B cell (primary cell): ENCODE measurements at regions of chr10 and their contacts with region 1.

Region 1: DNA sequence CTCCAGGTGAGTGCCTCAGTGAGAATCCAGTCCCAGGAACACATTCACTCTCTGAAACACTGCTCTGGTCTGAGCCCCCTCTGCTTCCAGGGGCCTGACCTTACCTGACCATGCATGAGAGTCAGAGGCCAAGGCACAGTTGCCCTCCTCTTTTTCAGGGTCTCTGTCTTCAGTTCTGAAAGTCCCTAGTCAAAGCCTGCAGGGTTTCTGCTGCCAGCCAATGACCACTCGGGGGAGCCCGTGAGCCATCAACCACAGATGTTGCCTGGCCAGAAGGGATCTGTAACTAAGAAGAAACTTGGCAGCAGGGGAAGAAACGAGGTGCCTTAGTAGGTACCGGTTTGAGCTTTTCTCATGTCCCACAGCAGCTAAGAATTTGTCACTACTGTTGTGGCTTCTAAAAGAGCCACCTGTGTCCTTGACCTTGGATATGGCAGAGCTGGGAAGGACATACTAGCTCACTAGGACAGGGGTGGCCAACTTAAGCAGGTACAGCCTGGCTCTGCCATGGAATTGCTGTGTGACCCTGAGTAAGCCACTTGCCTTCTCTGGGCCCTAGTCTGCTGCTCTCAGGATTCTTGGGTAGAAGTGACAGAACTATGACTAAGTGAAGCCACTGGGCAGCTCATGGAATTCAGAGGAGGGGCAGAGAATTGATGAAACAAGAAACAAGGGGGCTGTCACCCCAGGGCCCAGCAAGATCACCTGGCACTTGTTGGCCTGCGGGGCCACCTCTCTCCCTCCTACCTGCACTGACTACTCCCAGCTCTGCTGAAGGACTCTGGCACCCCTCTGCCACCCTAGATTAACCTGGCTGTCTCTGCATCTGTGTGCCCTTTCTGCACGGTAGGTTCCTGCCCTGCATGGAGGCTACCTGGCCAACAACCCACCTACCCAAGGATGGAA is 83.8 kb upstream of the GPR26 start:
- DNase-seq: peak; percentile 72
- ATAC-seq: peak; percentile 68
- H3K4me3 ChIP-seq: no peak overlapping the region
- H3K4me3 Mint-ChIP-seq: no peak overlapping the region
- H3K27ac ChIP-seq: no peak overlapping the region
- H3K27ac Mint-ChIP-seq: no peak overlapping the region
- H3K4me1 ChIP-seq: no peaks in the 10 kb centered on the region
- H3K4me1 Mint-ChIP-seq: no peaks in the 10 kb centered on the region
- H3K27me3 ChIP-seq: peaks cover 0 to 34% (median 14%) of the 10 kb centered on the region in 4 experiments
- H3K27me3 Mint-ChIP-seq: peaks cover 60% of the 10 kb centered on the region
- CTCF ChIP-seq: peak; percentile 84

Region 2: GRCh38 chr10:123622381-123622780 is 40.0 kb after region 1 on chr10:
- CTCF ChIA-PET with region 1: no interaction called
- POLR2A ChIA-PET with region 1: no interaction called
- intact Hi-C with region 1: no loop called
- DNase-seq: no peak
- ATAC-seq: no peak
- H3K4me3 ChIP-seq: no peak overlapping the region
- H3K4me3 Mint-ChIP-seq: no peak overlapping the region
- H3K27ac ChIP-seq: no peak overlapping the region
- H3K27ac Mint-ChIP-seq: no peak overlapping the region
- H3K4me1 ChIP-seq: no peaks in the 10 kb centered on the region
- H3K4me1 Mint-ChIP-seq: no peaks in the 10 kb centered on the region
- H3K27me3 ChIP-seq: peaks cover 0 to 3% (median 0%) of the 10 kb centered on the region in 4 experiments
- H3K27me3 Mint-ChIP-seq: peaks cover 7% of the 10 kb centered on the region
- CTCF ChIP-seq: no peak

Region 3: DNA sequence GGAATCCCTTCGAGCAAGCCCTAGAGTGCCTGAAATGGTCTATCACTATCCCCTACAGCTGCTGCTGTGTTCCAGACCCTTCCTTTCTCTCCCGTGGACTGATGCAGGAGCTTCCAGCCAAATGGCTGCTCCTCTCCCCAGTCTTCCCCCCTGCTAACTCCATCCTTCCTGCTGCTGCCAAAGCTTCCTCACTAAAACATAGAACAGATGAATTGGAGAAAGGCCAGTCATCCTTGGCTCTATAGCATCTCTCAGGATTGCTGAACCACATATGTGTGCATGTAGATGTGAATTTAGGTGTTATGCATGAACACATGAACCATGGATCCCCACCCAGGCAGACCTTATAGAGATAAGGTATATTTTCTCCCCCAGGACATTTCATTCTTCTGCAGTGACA is 144.5 kb after region 1 on chr10:
- CTCF ChIA-PET with region 1: no interaction called
- POLR2A ChIA-PET with region 1: no interaction called
- intact Hi-C with region 1: no loop called
- DNase-seq: no peak
- ATAC-seq: no peak
- H3K4me3 ChIP-seq: no peak overlapping the region
- H3K4me3 Mint-ChIP-seq: no peak overlapping the region
- H3K27ac ChIP-seq: no peak overlapping the region
- H3K27ac Mint-ChIP-seq: no peak overlapping the region
- H3K4me1 ChIP-seq: no peaks in the 10 kb centered on the region
- H3K4me1 Mint-ChIP-seq: no peaks in the 10 kb centered on the region
- H3K27me3 ChIP-seq: peaks cover 0 to 3% (median 0%) of the 10 kb centered on the region in 4 experiments
- H3K27me3 Mint-ChIP-seq: no peaks in the 10 kb centered on the region
- CTCF ChIP-seq: no peak

Region 4: DNA sequence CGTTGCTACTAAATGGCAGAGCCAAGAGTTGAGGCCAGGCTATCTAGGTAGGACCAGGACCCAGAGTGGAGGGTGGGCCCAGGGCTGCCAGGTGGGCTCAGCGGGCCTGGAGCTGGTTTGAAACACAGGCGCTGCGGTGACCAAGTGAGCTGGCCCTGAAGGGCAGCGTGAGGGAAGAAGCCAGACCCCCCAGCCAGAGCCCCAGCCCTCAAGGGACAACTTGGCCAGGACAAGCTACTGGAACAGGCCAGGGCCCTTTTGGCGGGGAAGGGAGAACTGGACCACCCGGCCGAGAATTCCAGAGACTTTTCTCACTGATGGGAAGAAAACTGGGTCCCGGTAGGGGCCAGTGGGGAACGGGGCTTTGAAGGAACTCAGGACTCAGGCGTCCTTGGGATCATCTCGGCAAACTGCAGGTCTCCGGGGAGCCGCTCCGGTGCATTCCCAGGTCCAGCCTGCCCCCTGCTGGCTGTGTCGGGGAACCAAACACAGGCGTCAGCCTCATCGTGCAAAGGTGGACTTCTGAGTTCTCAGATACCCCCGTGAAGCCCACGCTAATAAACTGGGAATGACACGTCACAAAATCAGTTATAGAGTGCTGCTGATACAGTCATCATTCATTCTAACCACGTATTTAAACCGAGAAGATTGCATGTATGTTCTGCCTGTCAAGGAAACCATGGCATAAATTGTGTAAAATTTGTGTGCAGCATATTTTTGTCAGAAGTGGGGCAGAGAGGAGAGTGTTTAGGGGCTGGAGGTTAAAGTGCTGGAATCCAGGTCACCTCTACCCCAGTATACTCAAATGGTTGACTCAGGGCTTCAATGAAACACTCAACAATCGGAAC is 385.3 kb after region 1 on chr10:
- CTCF ChIA-PET with region 1: interaction called, 10 read pairs
- POLR2A ChIA-PET with region 1: no interaction called
- intact Hi-C with region 1: no loop called
- DNase-seq: peak; percentile 46
- ATAC-seq: no peak
- H3K4me3 ChIP-seq: no peak overlapping the region
- H3K4me3 Mint-ChIP-seq: no peak overlapping the region
- H3K27ac ChIP-seq: no peak overlapping the region
- H3K27ac Mint-ChIP-seq: no peak overlapping the region
- H3K4me1 ChIP-seq: peaks cover 3 to 8% of the 10 kb centered on the region in 2 donors
- H3K4me1 Mint-ChIP-seq: peaks cover 5% of the 10 kb centered on the region
- H3K27me3 ChIP-seq: peaks cover 0 to 68% (median 38%) of the 10 kb centered on the region in 4 experiments
- H3K27me3 Mint-ChIP-seq: peaks cover 80% of the 10 kb centered on the region
- CTCF ChIP-seq: peak; percentile 70

Region 5: DNA sequence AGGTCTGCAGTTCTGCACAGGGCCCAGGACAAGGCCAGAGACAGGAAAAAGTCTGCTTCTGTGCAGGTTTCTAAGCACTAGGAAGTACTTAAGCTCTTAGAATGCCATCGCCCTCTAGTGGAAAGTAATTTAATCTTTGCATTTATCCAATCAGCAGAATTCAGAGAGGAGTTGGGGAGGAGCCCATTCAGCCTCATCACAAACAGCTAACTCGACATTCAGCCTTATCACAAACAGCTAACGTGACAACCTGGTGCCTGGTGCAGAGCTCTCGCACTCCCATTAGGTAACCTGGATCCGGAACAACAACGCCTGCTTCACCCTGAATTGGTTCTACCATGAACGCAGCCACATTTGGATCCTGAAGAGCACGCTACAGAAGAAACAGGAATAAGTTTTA is 821.2 kb after region 1 on chr10:
- CTCF ChIA-PET with region 1: interaction called, 4 read pairs
- POLR2A ChIA-PET with region 1: no interaction called
- intact Hi-C with region 1: loop called (anchors 1 kb)
- DNase-seq: peak; percentile 83
- ATAC-seq: peak; percentile 99
- H3K4me3 ChIP-seq: no peak overlapping the region
- H3K4me3 Mint-ChIP-seq: no peak overlapping the region
- H3K27ac ChIP-seq: no peak overlapping the region
- H3K27ac Mint-ChIP-seq: peak overlapping the region; percentile 66
- H3K4me1 ChIP-seq: peaks cover 5 to 9% of the 10 kb centered on the region in 2 donors
- H3K4me1 Mint-ChIP-seq: peaks cover 9% of the 10 kb centered on the region
- H3K27me3 ChIP-seq: no peaks in the 10 kb centered on the region
- H3K27me3 Mint-ChIP-seq: no peaks in the 10 kb centered on the region
- CTCF ChIP-seq: peak; percentile 74